Naive thymus-derived CD4-positive, alpha-beta T cell (primary cell): ENCODE measurements at regions of chr7 and their contacts with region 1.

Region 1: GRCh38 chr7:79298145-79298760 is 155.2 kb downstream of the MAGI2 start:
- DNase-seq: no peak
- ATAC-seq: no peak
- H3K4me3 ChIP-seq: no peak overlapping the region
- H3K4me3 Mint-ChIP-seq: no peak overlapping the region
- H3K27ac ChIP-seq: no peak overlapping the region
- H3K27ac Mint-ChIP-seq: no peak overlapping the region
- H3K4me1 ChIP-seq: no peaks in the 10 kb centered on the region
- H3K4me1 Mint-ChIP-seq: no peaks in the 10 kb centered on the region
- H3K27me3 ChIP-seq: no peaks in the 10 kb centered on the region
- H3K27me3 Mint-ChIP-seq: no peaks in the 10 kb centered on the region

Region 2: DNA sequence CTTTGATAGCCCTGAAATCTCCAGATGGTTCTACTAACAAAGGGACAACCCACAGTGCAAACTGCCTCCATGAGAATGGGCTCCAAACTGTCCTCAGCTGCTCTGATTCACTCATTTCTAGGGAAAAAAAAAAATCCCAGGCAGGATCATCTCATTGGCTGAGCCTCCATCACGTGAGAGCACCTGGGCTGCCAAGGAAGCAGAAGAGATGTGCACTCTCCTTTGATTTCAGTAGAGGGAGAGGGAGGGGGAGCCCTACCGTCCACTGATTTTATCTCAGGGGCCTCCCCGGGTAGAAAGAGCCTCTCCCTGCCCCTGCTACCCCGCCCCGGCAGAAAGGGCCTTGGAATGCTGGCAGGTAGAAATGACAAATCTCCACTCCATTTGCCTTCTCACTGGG is 774.3 kb before region 1 on chr7:
- CTCF ChIA-PET with region 1: no interaction called
- POLR2A ChIA-PET with region 1: no interaction called
- intact Hi-C with region 1: no loop called
- DNase-seq: no peak
- ATAC-seq: no peak
- H3K4me3 ChIP-seq: no peak overlapping the region
- H3K4me3 Mint-ChIP-seq: no peak overlapping the region
- H3K27ac ChIP-seq: no peak overlapping the region
- H3K27ac Mint-ChIP-seq: no peak overlapping the region
- H3K4me1 ChIP-seq: no peaks in the 10 kb centered on the region
- H3K4me1 Mint-ChIP-seq: no peaks in the 10 kb centered on the region
- H3K27me3 ChIP-seq: no peaks in the 10 kb centered on the region
- H3K27me3 Mint-ChIP-seq: no peaks in the 10 kb centered on the region

Region 3: DNA sequence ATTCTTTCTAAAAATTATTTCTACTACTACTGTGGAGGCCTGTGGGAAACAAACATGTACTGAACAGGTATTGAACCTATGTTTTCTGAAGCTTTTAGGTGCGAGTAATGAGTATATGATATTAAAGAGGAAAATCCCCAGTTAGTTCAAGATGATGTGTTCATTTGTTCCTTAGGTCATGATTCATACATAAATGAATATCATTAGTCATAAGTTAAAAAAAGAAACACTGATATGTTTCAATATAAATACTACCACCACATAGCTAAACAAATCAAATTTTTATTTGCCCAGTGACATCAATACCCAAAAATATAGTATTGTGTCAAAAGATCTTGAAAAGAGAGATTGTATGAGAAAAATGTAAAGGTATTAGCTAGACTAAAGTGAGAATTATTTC is 625.7 kb after region 1 on chr7:
- CTCF ChIA-PET with region 1: no interaction called
- POLR2A ChIA-PET with region 1: no interaction called
- intact Hi-C with region 1: loop called in 1 of 2 experiments (anchors 5 kb)
- DNase-seq: no peak
- ATAC-seq: no peak
- H3K4me3 ChIP-seq: no peak overlapping the region
- H3K4me3 Mint-ChIP-seq: no peak overlapping the region
- H3K27ac ChIP-seq: no peak overlapping the region
- H3K27ac Mint-ChIP-seq: no peak overlapping the region
- H3K4me1 ChIP-seq: no peaks in the 10 kb centered on the region
- H3K4me1 Mint-ChIP-seq: no peaks in the 10 kb centered on the region
- H3K27me3 ChIP-seq: no peaks in the 10 kb centered on the region
- H3K27me3 Mint-ChIP-seq: no peaks in the 10 kb centered on the region

Region 4: GRCh38 chr7:79998363-79998762 is 700.1 kb after region 1 on chr7:
- CTCF ChIA-PET with region 1: no interaction called
- POLR2A ChIA-PET with region 1: no interaction called
- intact Hi-C with region 1: no loop called
- DNase-seq: no peak
- ATAC-seq: no peak
- H3K4me3 ChIP-seq: no peak overlapping the region
- H3K4me3 Mint-ChIP-seq: no peak overlapping the region
- H3K27ac ChIP-seq: no peak overlapping the region
- H3K27ac Mint-ChIP-seq: no peak overlapping the region
- H3K4me1 ChIP-seq: no peaks in the 10 kb centered on the region
- H3K4me1 Mint-ChIP-seq: no peaks in the 10 kb centered on the region
- H3K27me3 ChIP-seq: no peaks in the 10 kb centered on the region
- H3K27me3 Mint-ChIP-seq: no peaks in the 10 kb centered on the region

Region 5: GRCh38 chr7:80047856-80048459 is 749.7 kb after region 1 on chr7:
- CTCF ChIA-PET with region 1: interaction called, 6 read pairs
- POLR2A ChIA-PET with region 1: no interaction called
- intact Hi-C with region 1: loop called in 1 of 2 experiments (anchors 1 kb)
- DNase-seq: no peak
- ATAC-seq: no peak
- H3K4me3 ChIP-seq: no peak overlapping the region
- H3K4me3 Mint-ChIP-seq: no peak overlapping the region
- H3K27ac ChIP-seq: no peak overlapping the region
- H3K27ac Mint-ChIP-seq: no peak overlapping the region
- H3K4me1 ChIP-seq: no peaks in the 10 kb centered on the region
- H3K4me1 Mint-ChIP-seq: no peaks in the 10 kb centered on the region
- H3K27me3 ChIP-seq: no peaks in the 10 kb centered on the region
- H3K27me3 Mint-ChIP-seq: no peaks in the 10 kb centered on the region

Region 6: GRCh38 chr7:80151274-80151665 is 853.0 kb after region 1 on chr7:
- CTCF ChIA-PET with region 1: no interaction called
- POLR2A ChIA-PET with region 1: no interaction called
- intact Hi-C with region 1: loop called in 1 of 2 experiments (anchors 10 kb)
- DNase-seq: peak in 8 of 9 donors; percentile 34 to 59 (median 48)
- ATAC-seq: peak; percentile 57
- H3K4me3 ChIP-seq: no peak overlapping the region
- H3K4me3 Mint-ChIP-seq: peak overlapping the region in 4 of 10 donors; percentile 13 to 57 (median 26)
- H3K27ac ChIP-seq: no peak overlapping the region
- H3K27ac Mint-ChIP-seq: peak overlapping the region in 3 of 9 donors; percentile 38 to 52 (median 38)
- H3K4me1 ChIP-seq: no peaks in the 10 kb centered on the region
- H3K4me1 Mint-ChIP-seq: peaks cover 1 to 20% (median 16%) of the 10 kb centered on the region in 7 donors
- H3K27me3 ChIP-seq: no peaks in the 10 kb centered on the region
- H3K27me3 Mint-ChIP-seq: peaks cover 0 to 9% (median 0%) of the 10 kb centered on the region in 5 donors

Region 7: GRCh38 chr7:80453699-80454340 is 1155.6 kb after region 1 on chr7:
- CTCF ChIA-PET with region 1: no interaction called
- POLR2A ChIA-PET with region 1: no interaction called
- intact Hi-C with region 1: loop called in 1 of 2 experiments (anchors 10 kb)
- DNase-seq: peak in 1 of 9 donors; percentile 4
- ATAC-seq: no peak
- H3K4me3 ChIP-seq: no peak overlapping the region
- H3K4me3 Mint-ChIP-seq: no peak overlapping the region
- H3K27ac ChIP-seq: no peak overlapping the region
- H3K27ac Mint-ChIP-seq: no peak overlapping the region
- H3K4me1 ChIP-seq: no peaks in the 10 kb centered on the region
- H3K4me1 Mint-ChIP-seq: no peaks in the 10 kb centered on the region
- H3K27me3 ChIP-seq: no peaks in the 10 kb centered on the region
- H3K27me3 Mint-ChIP-seq: no peaks in the 10 kb centered on the region